ENCODE measurements at regions of chr3 and their contacts with region 1.

Region 1: DNA sequence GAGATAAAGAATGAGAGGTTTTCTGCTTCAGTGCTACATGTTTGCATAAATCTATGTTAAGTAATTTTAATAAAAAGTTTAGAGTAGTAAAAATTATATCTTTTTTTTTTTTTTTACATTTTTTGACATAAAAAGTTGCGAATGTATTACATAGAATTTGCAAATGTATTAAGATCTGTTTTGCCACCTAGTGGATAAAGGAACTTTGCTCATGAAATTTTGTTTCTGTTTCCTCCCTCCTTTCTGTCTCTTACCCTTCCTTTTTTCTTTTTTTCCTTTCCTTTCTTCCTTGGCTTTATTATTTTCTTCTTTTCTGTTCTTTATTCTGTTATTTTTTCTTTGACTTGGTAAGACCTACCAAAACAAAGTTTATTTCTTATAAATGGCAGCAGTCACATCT is 58.5 kb upstream of the UTS2B start:
- DNase-seq: no peak
- ATAC-seq: no peak
- H3K4me3 Mint-ChIP-seq: no peak overlapping the region
- H3K27ac Mint-ChIP-seq: peak overlapping the region; percentile 68
- H3K4me1 Mint-ChIP-seq: peaks cover 11% of the 10 kb centered on the region
- H3K27me3 Mint-ChIP-seq: no peaks in the 10 kb centered on the region
- CTCF ChIP-seq: no peak

Region 2: GRCh38 chr3:191136347-191136746 is 252.5 kb before region 1 on chr3:
- CTCF ChIA-PET with region 1: interaction called, 4 read pairs
- POLR2A ChIA-PET with region 1: no interaction called
- intact Hi-C with region 1: loop called (anchors 1 kb)
- DNase-seq: no peak
- ATAC-seq: no peak
- H3K4me3 Mint-ChIP-seq: no peak overlapping the region
- H3K27ac Mint-ChIP-seq: no peak overlapping the region
- H3K4me1 Mint-ChIP-seq: peaks cover 38% of the 10 kb centered on the region
- H3K27me3 Mint-ChIP-seq: no peaks in the 10 kb centered on the region
- CTCF ChIP-seq: no peak

Region 3: DNA sequence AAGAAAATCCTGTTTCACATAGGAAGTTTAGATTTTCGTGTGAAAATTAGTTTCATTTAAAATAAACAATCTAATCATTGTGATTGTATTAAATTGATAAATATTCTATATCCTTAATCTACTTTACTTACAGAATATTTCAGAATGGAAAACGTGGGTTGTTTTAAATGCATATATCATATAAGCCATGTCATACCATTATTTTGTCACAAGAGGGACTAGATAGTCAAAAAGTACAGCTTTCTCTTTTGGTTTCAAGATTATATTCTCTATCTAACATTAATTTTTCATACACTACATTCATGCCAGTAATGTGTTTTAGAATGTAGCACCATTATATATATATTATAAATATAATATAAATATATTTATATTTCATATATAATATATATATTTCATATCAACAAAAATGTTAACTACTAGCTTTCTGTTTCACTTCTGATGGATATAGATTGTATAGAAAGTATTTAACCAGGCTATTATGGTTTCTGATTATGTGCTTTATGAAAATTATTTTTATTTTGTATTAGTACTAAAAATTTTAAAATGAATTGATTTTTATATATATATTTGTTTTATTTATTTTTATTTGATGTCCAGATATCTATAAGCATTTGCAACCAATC is 144.5 kb before region 1 on chr3:
- CTCF ChIA-PET with region 1: interaction called, 6 read pairs
- POLR2A ChIA-PET with region 1: no interaction called
- intact Hi-C with region 1: loop called (anchors 1 kb)
- DNase-seq: no peak
- ATAC-seq: peak; percentile 26
- H3K4me3 Mint-ChIP-seq: no peak overlapping the region
- H3K27ac Mint-ChIP-seq: no peak overlapping the region
- H3K4me1 Mint-ChIP-seq: peaks cover 40% of the 10 kb centered on the region
- H3K27me3 Mint-ChIP-seq: no peaks in the 10 kb centered on the region
- CTCF ChIP-seq: peak; percentile 76

Region 4: GRCh38 chr3:191369616-191370010 is 19.2 kb before region 1 on chr3:
- CTCF ChIA-PET with region 1: no interaction called
- POLR2A ChIA-PET with region 1: interaction called, 3 read pairs
- intact Hi-C with region 1: loop called (anchors 2 kb)
- DNase-seq: no peak
- ATAC-seq: no peak
- H3K4me3 Mint-ChIP-seq: no peak overlapping the region
- H3K27ac Mint-ChIP-seq: no peak overlapping the region
- H3K4me1 Mint-ChIP-seq: peaks cover 18% of the 10 kb centered on the region
- H3K27me3 Mint-ChIP-seq: no peaks in the 10 kb centered on the region
- CTCF ChIP-seq: no peak

Measured in activated B cell treated with CpG ODN at 0.5 μM for 24 hours (primary cell).